ENCODE measurements at regions of chr13 and their contacts with region 1.

Region 1: GRCh38 chr13:41137951-41138350 is 5.3 kb upstream of the KBTBD6 start:
- DNase-seq: no peak
- H3K4me3 ChIP-seq: no peak overlapping the region
- H3K27ac ChIP-seq: no peak overlapping the region
- H3K4me1 ChIP-seq: peaks cover 3% of the 10 kb centered on the region
- H3K27me3 ChIP-seq: no peaks in the 10 kb centered on the region
- CTCF ChIP-seq: no peak
- EP300 ChIP-seq: no peak
- POLR2A ChIP-seq: no peak

Region 2: GRCh38 chr13:41193919-41194824 is 56.2 kb after region 1 on chr13 and contains the start of gene KBTBD7:
- intact Hi-C with region 1: loop called in 2 of 4 experiments (anchors 5 kb)
- DNase-seq: peak; percentile 91 to 95 (median 93)
- H3K4me3 ChIP-seq: peak within 1 kb of the TSS; percentile 86
- H3K27ac ChIP-seq: peak within 1 kb of the TSS; percentile 49 to 74
- H3K4me1 ChIP-seq: peaks cover 13% of the 10 kb centered on the region
- H3K27me3 ChIP-seq: no peaks in the 10 kb centered on the region
- CTCF ChIP-seq: peak in 1 of 3 donors; percentile 7
- EP300 ChIP-seq: no peak
- POLR2A ChIP-seq: peak; percentile 41
- total RNA-seq, gene KBTBD7: 5.2 to 11.8 (median 6.6) TPM

Region 3: DNA sequence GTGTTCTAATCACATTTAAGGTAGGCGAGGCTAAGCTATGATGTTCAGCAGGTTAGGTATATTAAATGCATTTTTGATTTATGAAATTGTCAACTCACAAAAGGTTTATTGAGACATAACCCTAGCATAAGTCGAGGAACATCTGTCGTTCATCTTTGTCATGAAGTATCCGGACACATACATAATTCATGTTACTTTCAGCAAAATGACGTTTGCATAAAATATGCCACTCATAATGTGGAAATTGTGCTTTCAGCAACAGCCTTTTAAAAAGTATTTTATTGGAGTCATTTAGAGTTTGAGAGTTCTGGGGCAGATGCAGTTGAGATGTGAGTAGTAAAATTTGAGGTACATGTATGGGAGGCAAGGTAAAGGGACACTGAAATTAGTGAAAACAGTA is 239.5 kb after region 1 on chr13:
- intact Hi-C with region 1: no loop called
- DNase-seq: no peak
- H3K4me3 ChIP-seq: no peak overlapping the region
- H3K27ac ChIP-seq: no peak overlapping the region
- H3K4me1 ChIP-seq: no peaks in the 10 kb centered on the region
- H3K27me3 ChIP-seq: no peaks in the 10 kb centered on the region
- CTCF ChIP-seq: no peak
- EP300 ChIP-seq: no peak
- POLR2A ChIP-seq: no peak